CD4-positive, alpha-beta memory T cell (primary cell): ENCODE measurements at regions of chr3 and their contacts with region 1.

Region 1: DNA sequence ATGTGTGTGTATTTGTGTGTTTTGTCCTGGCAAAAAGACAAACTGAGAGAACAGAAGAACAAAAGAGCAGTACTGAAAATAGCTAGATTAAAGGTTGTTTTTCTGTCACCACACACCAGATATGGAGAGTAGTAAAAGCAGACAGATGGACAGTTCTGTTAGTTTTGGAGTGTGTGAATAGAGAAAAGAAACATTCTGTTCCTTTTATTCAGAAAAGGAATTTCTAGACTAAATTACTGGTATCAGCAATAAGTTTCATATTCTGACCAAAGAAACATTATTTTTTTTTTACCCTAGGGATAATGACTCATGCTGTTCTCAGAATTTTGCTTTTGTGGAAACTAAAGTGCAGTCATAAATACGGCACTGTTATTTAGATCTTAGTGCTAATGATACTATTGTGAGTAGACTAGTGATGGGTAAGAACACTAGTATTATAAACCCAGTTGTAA is 32.9 kb downstream of the PIK3CA start:
- DNase-seq: no peak
- H3K4me3 ChIP-seq: no peak overlapping the region
- H3K4me3 Mint-ChIP-seq: peak overlapping the region in 2 of 8 donors; percentile 6 to 19
- H3K27ac ChIP-seq: no peak overlapping the region
- H3K27ac Mint-ChIP-seq: no peak overlapping the region
- H3K4me1 ChIP-seq: peaks cover 68% of the 10 kb centered on the region
- H3K4me1 Mint-ChIP-seq: peaks cover 36 to 43% (median 39%) of the 10 kb centered on the region in 4 donors
- H3K27me3 ChIP-seq: no peaks in the 10 kb centered on the region
- H3K27me3 Mint-ChIP-seq: no peaks in the 10 kb centered on the region

Region 2: DNA sequence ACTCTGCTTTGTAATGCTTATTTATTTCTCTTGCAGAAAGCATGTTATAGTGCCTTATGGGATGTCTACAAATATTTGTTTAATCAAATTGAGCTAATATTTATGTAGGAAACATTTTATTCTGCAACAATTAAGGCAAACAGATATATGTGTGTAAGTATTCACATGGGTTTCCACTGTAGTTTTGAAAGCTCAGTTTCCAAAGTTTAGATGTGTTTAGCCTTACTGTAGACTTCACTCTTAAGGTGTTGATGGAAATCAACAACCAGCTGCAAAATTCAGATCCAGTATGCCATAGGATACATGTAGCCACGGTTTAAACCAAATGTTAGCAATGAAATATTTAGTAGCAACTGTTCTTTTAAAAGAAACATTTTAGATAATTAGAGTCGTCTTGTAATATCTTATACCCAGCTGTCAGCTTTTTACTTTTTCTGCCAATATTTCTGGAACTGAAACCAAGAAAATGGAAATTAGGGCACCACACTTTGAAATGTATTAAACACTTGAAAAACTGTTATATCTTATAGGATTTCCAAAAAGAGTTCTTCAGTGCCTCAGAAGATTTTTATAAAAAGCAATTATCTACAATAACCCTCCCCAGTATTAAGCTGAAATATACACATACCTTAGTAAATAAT is 14.4 kb before region 1 on chr3:
- CTCF ChIA-PET with region 1: no interaction called
- POLR2A ChIA-PET with region 1: no interaction called
- intact Hi-C with region 1: loop called (anchors 2 kb)
- DNase-seq: no peak
- H3K4me3 ChIP-seq: no peak overlapping the region
- H3K4me3 Mint-ChIP-seq: no peak overlapping the region
- H3K27ac ChIP-seq: no peak overlapping the region
- H3K27ac Mint-ChIP-seq: peak overlapping the region in 1 of 7 donors; percentile 50
- H3K4me1 ChIP-seq: peaks cover 13% of the 10 kb centered on the region
- H3K4me1 Mint-ChIP-seq: peaks cover 33 to 44% (median 38%) of the 10 kb centered on the region in 4 donors
- H3K27me3 ChIP-seq: no peaks in the 10 kb centered on the region
- H3K27me3 Mint-ChIP-seq: no peaks in the 10 kb centered on the region

Region 3: GRCh38 chr3:179196098-179196497 is 15.1 kb after region 1 on chr3:
- CTCF ChIA-PET with region 1: interaction called, 3 read pairs
- POLR2A ChIA-PET with region 1: interaction called, 3 read pairs
- intact Hi-C with region 1: loop called (anchors 2 kb)
- DNase-seq: peak; percentile 48 to 69 (median 57)
- H3K4me3 ChIP-seq: no peak overlapping the region
- H3K4me3 Mint-ChIP-seq: peak overlapping the region in 5 of 8 donors; percentile 17 to 73 (median 59)
- H3K27ac ChIP-seq: no peak overlapping the region
- H3K27ac Mint-ChIP-seq: peak overlapping the region in 5 of 7 donors; percentile 37 to 70 (median 56)
- H3K4me1 ChIP-seq: peaks cover 29% of the 10 kb centered on the region
- H3K4me1 Mint-ChIP-seq: peaks cover 39 to 62% (median 52%) of the 10 kb centered on the region in 4 donors
- H3K27me3 ChIP-seq: no peaks in the 10 kb centered on the region
- H3K27me3 Mint-ChIP-seq: no peaks in the 10 kb centered on the region